Activated CD8-positive, alpha-beta memory T cell treated with anti-CD3 and anti-CD28 coated beads, Interleukin-2, amount 10 ng/mL, durations not matched to agents 7 days and 5 days (primary cell): ENCODE measurements at regions of chr12 and their contacts with region 1.

Region 1: DNA sequence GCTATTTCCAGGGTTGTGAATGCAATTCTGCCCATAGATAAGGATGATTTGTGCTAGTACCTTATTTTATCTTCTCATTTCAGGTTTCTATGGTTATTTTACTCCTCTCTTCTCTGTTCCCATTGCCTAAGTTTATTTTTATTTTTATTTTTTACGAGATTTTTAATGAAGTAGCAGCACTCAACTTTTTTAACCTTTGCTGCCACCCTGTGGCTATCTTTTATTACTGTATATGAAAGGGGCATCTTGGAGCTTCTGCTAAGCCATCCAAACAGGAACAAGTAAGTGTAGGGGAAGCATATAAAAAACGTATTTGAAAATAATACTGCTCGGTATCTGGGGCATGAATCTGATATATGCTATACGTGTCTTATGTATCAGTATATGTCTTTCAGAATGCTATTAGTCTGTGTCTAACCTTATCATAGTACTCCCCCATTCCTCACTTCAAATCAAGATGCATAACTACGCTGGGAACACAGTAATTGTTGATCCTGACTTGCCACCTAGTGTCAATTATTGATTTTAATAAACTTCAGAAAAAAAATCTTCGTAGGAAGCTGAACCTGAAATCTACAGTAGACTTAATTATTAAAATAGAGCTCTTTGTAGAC is 60.3 kb downstream of the KLRG1 start:
- DNase-seq: no peak
- ATAC-seq: peak; percentile 76
- H3K4me3 Mint-ChIP-seq: no peak overlapping the region
- H3K27ac Mint-ChIP-seq: no peak overlapping the region
- H3K4me1 Mint-ChIP-seq: peaks cover 7% of the 10 kb centered on the region
- H3K27me3 Mint-ChIP-seq: peaks cover 4% of the 10 kb centered on the region

Region 2: GRCh38 chr12:8681041-8681902 is 368.4 kb before region 1 on chr12:
- CTCF ChIA-PET with region 1: interaction called, 10 read pairs
- DNase-seq: no peak
- ATAC-seq: no peak
- H3K4me3 Mint-ChIP-seq: no peak overlapping the region
- H3K27ac Mint-ChIP-seq: no peak overlapping the region
- H3K4me1 Mint-ChIP-seq: no peaks in the 10 kb centered on the region
- H3K27me3 Mint-ChIP-seq: peaks cover 16% of the 10 kb centered on the region

Region 3: GRCh38 chr12:9064201-9064814 is 14.7 kb after region 1 on chr12:
- CTCF ChIA-PET with region 1: interaction called, 13 read pairs
- DNase-seq: peak; percentile 67
- ATAC-seq: peak; percentile 90
- H3K4me3 Mint-ChIP-seq: peak overlapping the region; percentile 62
- H3K27ac Mint-ChIP-seq: no peak overlapping the region
- H3K4me1 Mint-ChIP-seq: peaks cover 4% of the 10 kb centered on the region
- H3K27me3 Mint-ChIP-seq: peaks cover 29% of the 10 kb centered on the region